CD8-positive, alpha-beta T cell (primary cell): ENCODE measurements at regions of chr2 and their contacts with region 1.

Region 1: GRCh38 chr2:12514631-12515433 is 201.9 kb upstream of the TRIB2 start:
- DNase-seq: peak in 6 of 9 experiments; percentile 9 to 63 (median 46)
- ATAC-seq: peak; percentile 88
- H3K4me3 ChIP-seq: no peak overlapping the region
- H3K4me3 Mint-ChIP-seq: peak overlapping the region; percentile 53
- H3K27ac ChIP-seq: no peak overlapping the region
- H3K27ac Mint-ChIP-seq: peak overlapping the region; percentile 74
- H3K4me1 ChIP-seq: peaks cover 30% of the 10 kb centered on the region
- H3K4me1 Mint-ChIP-seq: peaks cover 70% of the 10 kb centered on the region
- H3K27me3 ChIP-seq: no peaks in the 10 kb centered on the region
- H3K27me3 Mint-ChIP-seq: no peaks in the 10 kb centered on the region
- CTCF ChIP-seq: no peak

Region 2: DNA sequence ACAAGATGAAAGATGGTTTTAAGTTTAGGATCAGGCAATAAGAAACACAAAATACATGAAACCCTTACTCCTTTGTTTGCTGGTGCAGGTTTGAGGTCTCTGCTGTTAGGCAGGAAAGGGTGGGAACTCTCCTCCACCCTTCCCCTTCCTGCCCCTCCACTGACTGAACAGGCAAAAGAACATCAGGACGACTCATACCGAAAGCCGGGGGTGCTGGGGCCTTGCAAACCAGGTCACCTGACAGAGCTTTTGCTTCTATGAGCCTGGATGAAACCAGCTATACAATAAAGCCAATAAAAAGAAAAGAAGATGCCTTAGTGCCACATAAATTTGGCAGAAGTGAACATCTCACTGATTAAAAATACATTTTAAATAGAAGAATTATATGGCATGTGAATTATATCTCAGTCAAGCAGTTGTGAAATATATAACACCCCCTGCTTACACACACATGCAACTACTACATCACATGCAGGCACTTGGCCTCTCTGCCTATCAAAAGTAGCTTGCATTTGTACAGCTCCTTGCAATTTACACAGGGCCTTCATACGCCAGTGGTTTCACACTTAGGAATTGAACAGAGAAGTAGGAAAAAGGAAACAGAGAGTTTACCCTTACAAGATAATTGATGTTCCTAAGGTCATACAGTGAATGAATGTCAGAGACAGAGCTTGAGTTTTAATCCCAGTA is 13.2 kb before region 1 on chr2:
- CTCF ChIA-PET with region 1: no interaction called
- POLR2A ChIA-PET with region 1: interaction called, 5 read pairs
- intact Hi-C with region 1: loop called in 1 of 2 experiments (anchors 1 kb)
- DNase-seq: peak in 8 of 9 experiments; percentile 45 to 84 (median 63)
- ATAC-seq: peak; percentile 85
- H3K4me3 ChIP-seq: no peak overlapping the region
- H3K4me3 Mint-ChIP-seq: peak overlapping the region; percentile 65
- H3K27ac ChIP-seq: peak overlapping the region; percentile 36 to 80
- H3K27ac Mint-ChIP-seq: peak overlapping the region; percentile 91
- H3K4me1 ChIP-seq: peaks cover 95% of the 10 kb centered on the region
- H3K4me1 Mint-ChIP-seq: peaks cover 98% of the 10 kb centered on the region
- H3K27me3 ChIP-seq: no peaks in the 10 kb centered on the region
- H3K27me3 Mint-ChIP-seq: no peaks in the 10 kb centered on the region
- CTCF ChIP-seq: no peak

Region 3: GRCh38 chr2:12534646-12535263 is 19.9 kb after region 1 on chr2:
- CTCF ChIA-PET with region 1: no interaction called
- POLR2A ChIA-PET with region 1: no interaction called
- intact Hi-C with region 1: loop called in 1 of 2 experiments (anchors 1 kb)
- DNase-seq: no peak
- ATAC-seq: no peak
- H3K4me3 ChIP-seq: no peak overlapping the region
- H3K4me3 Mint-ChIP-seq: no peak overlapping the region
- H3K27ac ChIP-seq: no peak overlapping the region
- H3K27ac Mint-ChIP-seq: no peak overlapping the region
- H3K4me1 ChIP-seq: peaks cover 8% of the 10 kb centered on the region
- H3K4me1 Mint-ChIP-seq: peaks cover 22% of the 10 kb centered on the region
- H3K27me3 ChIP-seq: no peaks in the 10 kb centered on the region
- H3K27me3 Mint-ChIP-seq: no peaks in the 10 kb centered on the region
- CTCF ChIP-seq: no peak